Tibial artery (tissue), 4 donors: ENCODE measurements at regions of chr3 and their contacts with region 1.

Region 1: GRCh38 chr3:25433868-25434267 is 5.8 kb downstream of the RARB start:
- DNase-seq: no peak
- H3K4me3 ChIP-seq: peak overlapping the region; percentile 9 to 11
- H3K27ac ChIP-seq: peak overlapping the region; percentile 79 to 85
- H3K4me1 ChIP-seq: peaks cover 0 to 48% (median 3%) of the 10 kb centered on the region in 4 donors
- H3K27me3 ChIP-seq: no peaks in the 10 kb centered on the region
- CTCF ChIP-seq: no peak

Region 2: DNA sequence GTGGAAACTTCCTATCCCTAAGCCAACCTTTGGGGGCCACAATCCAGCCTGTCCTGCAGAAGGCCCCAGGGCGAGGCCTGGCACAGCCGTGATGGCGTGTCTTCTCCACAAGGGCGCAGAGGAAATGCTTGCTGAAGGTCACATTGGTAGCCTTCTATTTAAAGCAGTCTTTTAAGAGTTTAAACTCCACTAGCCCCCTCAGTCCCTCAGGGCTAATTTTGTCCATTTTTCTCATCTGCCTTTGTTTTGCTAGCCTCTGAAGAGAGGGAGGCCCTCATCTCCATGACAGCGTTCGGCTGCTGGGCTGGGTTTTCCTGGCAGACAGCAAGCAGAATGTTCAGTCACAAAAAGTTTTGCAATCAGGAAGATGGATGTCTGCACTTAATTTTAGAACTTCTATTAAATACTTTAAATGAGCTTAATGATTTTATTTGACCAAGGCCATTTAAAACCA is 35.0 kb after region 1 on chr3:
- intact Hi-C with region 1: loop called (anchors 5 kb)
- DNase-seq: peak; percentile 72 to 87
- H3K4me3 ChIP-seq: no peak overlapping the region
- H3K27ac ChIP-seq: peak overlapping the region in 1 of 2 donors; percentile 73
- H3K4me1 ChIP-seq: peaks cover 10 to 60% (median 31%) of the 10 kb centered on the region in 4 donors
- H3K27me3 ChIP-seq: no peaks in the 10 kb centered on the region
- CTCF ChIP-seq: peak; percentile 43 to 47

Region 3: DNA sequence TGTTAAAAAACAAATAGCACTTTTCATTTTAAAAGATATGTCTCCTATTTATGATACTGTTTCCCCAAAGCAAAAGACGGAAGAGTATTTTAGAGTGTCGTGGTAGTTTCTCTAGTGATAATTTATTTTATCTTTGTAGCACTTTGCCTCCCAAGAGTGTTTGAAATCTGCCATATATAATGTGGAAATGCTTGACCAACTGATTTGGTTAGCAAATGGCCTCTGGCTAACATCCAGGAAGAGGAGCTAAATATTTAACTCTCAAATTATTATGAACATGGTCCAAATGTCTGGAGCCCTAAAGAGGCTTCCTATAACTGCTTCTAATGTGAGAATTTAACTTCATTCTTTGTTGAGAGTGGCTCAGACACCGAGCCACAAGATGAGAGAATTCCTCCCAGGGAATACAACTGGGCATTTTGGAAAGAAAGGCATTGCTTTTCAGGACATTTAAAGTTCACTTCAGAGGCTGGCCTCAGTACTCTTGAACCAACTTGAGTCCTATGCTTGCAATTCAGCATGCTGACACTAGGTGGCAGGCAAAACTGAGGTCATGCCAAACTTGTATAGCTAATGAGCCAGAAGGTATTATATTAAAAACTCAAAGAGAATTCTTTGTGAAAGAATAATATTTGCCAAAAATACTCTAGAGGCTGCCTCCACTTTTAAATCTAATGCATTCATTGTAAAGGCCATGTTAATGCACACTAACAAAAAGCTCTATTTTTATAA is 98.7 kb after region 1 on chr3:
- intact Hi-C with region 1: no loop called
- DNase-seq: no peak
- H3K4me3 ChIP-seq: no peak overlapping the region
- H3K27ac ChIP-seq: no peak overlapping the region
- H3K4me1 ChIP-seq: peaks cover 0 to 12% (median 4%) of the 10 kb centered on the region in 4 donors
- H3K27me3 ChIP-seq: no peaks in the 10 kb centered on the region
- CTCF ChIP-seq: peak; percentile 23 to 24